ENCODE measurements at regions of chr22 and their contacts with region 1.

Region 1: DNA sequence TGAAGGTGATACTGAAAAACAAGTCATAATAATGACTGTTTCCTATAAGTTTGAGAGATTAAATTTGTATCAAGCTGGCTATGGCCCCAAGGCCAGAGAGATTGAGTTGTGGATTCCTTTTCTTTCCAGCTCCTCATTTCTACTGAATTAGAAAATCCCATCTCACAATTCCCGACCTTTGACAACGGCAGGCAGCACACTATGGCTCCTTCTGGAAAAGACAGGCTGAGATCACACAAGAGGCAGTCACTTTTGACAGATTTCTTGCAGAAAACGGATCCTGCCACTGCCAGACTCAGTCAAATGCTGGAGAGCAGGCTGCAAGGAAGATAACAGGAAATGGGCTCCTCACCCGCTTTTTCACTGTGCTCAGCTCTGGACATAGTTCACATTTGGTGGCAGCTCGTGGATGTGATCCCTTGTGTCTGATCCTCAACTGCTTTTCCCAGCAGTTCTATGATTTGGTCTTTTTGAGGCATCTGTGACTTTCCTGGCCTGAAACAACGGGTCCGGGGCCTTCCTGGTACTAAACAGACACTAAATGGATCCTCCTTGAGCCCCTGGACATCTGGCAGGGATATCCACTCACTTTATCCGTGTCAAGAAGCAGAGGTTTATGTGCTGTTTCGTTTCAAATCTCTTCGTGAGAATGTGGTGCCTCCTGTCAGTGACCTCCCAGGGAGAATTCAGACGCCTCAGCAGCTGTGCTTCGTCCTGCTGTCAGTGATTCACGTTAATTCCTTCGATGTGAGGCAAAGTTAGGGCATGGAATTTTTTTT is 26.1 kb upstream of the RTL6 start:
- DNase-seq: peak; percentile 99
- ATAC-seq: peak; percentile 79
- H3K4me3 ChIP-seq: peak overlapping the region; percentile 9; the same call in 1 of the 2 replicates
- H3K27ac ChIP-seq: peak overlapping the region; percentile 94
- H3K4me1 ChIP-seq: peaks cover 21% of the 10 kb centered on the region
- H3K27me3 ChIP-seq: no peaks in the 10 kb centered on the region
- CTCF ChIP-seq: no peak
- POLR2A ChIP-seq: peak; percentile 78
- RAD21 ChIP-seq: peak; percentile 18; the same call in 1 of the 2 replicates

Region 2: GRCh38 chr22:44192098-44192810 is 331.9 kb before region 1 on chr22:
- CTCF ChIA-PET with region 1: no interaction called
- POLR2A ChIA-PET with region 1: no interaction called
- dilution Hi-C with region 1: no loop called
- in situ Hi-C with region 1: no loop called
- intact Hi-C with region 1: no loop called
- DNase-seq: no peak
- ATAC-seq: peak; percentile 46; the same call in 1 of the 2 replicates
- H3K4me3 ChIP-seq: no peak overlapping the region
- H3K27ac ChIP-seq: no peak overlapping the region
- H3K4me1 ChIP-seq: peaks cover 2% of the 10 kb centered on the region; the same call in 1 of the 2 replicates
- H3K27me3 ChIP-seq: peaks cover 42% of the 10 kb centered on the region
- CTCF ChIP-seq: no peak
- POLR2A ChIP-seq: no peak
- RAD21 ChIP-seq: no peak

Region 3: DNA sequence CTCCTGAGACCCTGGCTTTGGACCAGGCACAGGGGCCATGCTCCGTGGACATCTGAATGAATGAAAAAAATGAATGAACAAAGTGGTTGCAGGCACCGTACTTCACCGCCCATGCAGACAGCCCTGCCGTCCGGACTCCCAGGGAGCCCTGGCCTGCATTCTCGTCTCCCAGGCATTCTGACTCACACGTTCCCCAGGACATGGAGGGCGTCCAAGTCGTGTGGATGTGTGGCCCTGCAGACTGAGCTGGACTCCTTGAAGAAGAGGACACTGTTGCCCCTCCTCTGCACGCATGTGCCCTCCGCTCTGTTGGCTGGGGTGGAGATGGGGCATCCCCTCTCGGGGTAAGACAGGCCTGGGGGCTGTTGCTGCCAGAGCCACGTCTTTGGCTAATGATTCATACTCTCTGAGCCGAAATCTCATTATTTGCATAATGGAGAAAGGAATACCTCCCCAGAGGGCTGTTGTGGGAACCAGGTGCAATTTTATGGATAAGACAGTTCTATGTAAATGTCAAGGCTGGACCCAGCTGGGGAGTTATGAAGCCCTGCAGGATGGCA is 75.8 kb before region 1 on chr22:
- CTCF ChIA-PET with region 1: no interaction called
- POLR2A ChIA-PET with region 1: no interaction called
- dilution Hi-C with region 1: no loop called
- in situ Hi-C with region 1: no loop called
- intact Hi-C with region 1: no loop called
- DNase-seq: peak; percentile 94
- ATAC-seq: peak; percentile 88
- H3K4me3 ChIP-seq: no peak overlapping the region
- H3K27ac ChIP-seq: peak overlapping the region; percentile 73
- H3K4me1 ChIP-seq: peaks cover 20% of the 10 kb centered on the region
- H3K27me3 ChIP-seq: no peaks in the 10 kb centered on the region
- CTCF ChIP-seq: no peak
- POLR2A ChIP-seq: peak; percentile 63; the same call in 1 of the 2 replicates
- RAD21 ChIP-seq: peak; percentile 34

Region 4: DNA sequence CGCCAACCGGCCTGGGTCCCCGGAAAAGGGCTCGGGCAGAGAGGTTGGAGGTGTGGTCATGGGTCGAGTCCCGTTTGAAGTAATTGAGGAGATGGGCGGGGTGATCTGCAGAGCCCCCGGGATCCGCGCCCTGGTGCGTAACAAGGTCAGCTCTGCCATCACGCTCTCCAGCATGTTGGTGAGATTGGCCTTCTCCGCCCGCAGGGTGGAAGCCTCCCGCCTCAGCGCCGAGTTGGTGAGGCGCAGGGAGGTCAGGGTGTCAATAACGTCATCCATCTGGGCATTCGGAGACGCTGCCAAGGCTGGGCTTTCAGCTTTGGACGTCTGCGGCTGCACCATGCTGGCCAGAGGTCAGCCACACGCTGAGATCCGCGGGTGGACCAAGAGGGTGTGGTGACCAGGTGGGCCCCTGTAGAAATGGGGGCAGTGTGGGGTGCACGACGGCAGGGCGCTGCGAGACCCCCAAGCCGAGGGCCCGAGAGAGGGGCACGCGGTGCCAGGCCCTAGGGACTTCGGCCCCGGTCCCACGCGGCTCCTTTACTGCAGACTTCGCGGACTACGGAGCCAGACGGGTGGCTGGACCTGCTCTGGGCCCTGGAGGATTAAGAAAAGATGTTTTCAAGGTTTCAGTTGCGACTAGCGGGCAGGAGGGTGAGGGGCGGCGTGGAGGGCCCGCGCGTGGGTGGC is 26.8 kb before region 1 on chr22:
- CTCF ChIA-PET with region 1: no interaction called
- POLR2A ChIA-PET with region 1: no interaction called
- dilution Hi-C with region 1: no loop called
- in situ Hi-C with region 1: no loop called
- intact Hi-C with region 1: loop called (anchors 2 kb)
- DNase-seq: peak; percentile 34
- ATAC-seq: peak; percentile 6
- H3K4me3 ChIP-seq: peak overlapping the region; percentile 85
- H3K27ac ChIP-seq: peak overlapping the region; percentile 76
- H3K4me1 ChIP-seq: peaks cover 19% of the 10 kb centered on the region
- H3K27me3 ChIP-seq: no peaks in the 10 kb centered on the region
- CTCF ChIP-seq: no peak
- POLR2A ChIP-seq: no peak; the same call in 1 of the 2 replicates
- RAD21 ChIP-seq: 0 out of 2 replicates have a peak, but pooled peaks have one; percentile 1

Region 5: DNA sequence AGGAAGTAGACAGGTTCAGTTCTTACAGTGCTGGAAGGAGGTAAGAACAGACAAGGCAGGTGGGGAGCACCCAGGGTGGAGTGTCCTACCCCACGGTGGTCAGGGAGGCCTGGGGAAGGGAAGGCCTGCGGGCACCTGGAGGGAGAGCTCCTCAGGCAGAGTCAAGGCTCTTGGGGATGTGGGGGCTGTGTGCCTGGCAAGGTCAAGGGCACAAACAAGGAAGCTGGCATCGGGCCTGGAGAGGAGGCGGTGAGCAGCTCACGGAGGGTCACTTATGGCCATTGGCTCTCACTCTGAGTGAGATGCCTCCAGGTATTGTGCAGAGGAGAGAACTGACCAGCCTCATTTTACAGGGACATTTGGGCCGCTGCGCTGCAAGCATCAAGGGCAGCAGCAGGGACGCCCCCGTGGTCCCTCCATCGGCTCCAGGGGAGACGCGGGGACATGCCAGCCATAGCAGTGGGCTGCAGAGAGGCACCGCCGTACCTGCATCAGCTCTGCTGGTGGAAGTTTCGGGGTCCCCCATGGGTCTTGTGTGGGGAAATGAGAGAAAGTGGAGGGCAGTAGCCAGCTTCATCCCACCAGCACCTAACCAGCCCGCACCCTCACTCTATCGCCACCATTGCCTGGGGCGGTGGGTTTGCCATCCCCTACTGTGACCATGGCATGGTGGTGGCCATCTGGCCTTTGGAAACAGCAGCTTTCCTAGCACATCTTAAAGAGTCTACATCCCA is 11.4 kb after region 1 on chr22:
- CTCF ChIA-PET with region 1: interaction called, 3 read pairs
- POLR2A ChIA-PET with region 1: interaction called, 11 read pairs
- dilution Hi-C with region 1: no loop called
- in situ Hi-C with region 1: no loop called
- intact Hi-C with region 1: no loop called
- DNase-seq: no peak
- ATAC-seq: no peak
- H3K4me3 ChIP-seq: no peak overlapping the region
- H3K27ac ChIP-seq: no peak overlapping the region
- H3K4me1 ChIP-seq: peaks cover 1% of the 10 kb centered on the region; the same call in 1 of the 2 replicates
- H3K27me3 ChIP-seq: no peaks in the 10 kb centered on the region
- CTCF ChIP-seq: no peak
- POLR2A ChIP-seq: no peak
- RAD21 ChIP-seq: no peak

Region 6: GRCh38 chr22:44583061-44583760 is 59.0 kb after region 1 on chr22:
- CTCF ChIA-PET with region 1: no interaction called
- POLR2A ChIA-PET with region 1: no interaction called
- dilution Hi-C with region 1: no loop called
- in situ Hi-C with region 1: no loop called
- intact Hi-C with region 1: no loop called
- DNase-seq: peak; percentile 32
- ATAC-seq: peak; percentile 44
- H3K4me3 ChIP-seq: no peak overlapping the region
- H3K27ac ChIP-seq: no peak overlapping the region
- H3K4me1 ChIP-seq: peaks cover 3% of the 10 kb centered on the region
- H3K27me3 ChIP-seq: peaks cover 21% of the 10 kb centered on the region
- CTCF ChIP-seq: no peak
- POLR2A ChIP-seq: no peak
- RAD21 ChIP-seq: no peak